MCF 10A (cell line): ENCODE measurements at regions of chr3 and their contacts with region 1.

Region 1: GRCh38 chr3:72818092-72818773 is 30.0 kb downstream of the SHQ1 start:
- DNase-seq: peak; percentile 37
- H3K4me3 Mint-ChIP-seq: no peak overlapping the region
- H3K27ac Mint-ChIP-seq: no peak overlapping the region
- H3K4me1 Mint-ChIP-seq: peaks cover 6% of the 10 kb centered on the region
- H3K27me3 Mint-ChIP-seq: no peaks in the 10 kb centered on the region
- CTCF ChIP-seq: peak; percentile 80

Region 2: DNA sequence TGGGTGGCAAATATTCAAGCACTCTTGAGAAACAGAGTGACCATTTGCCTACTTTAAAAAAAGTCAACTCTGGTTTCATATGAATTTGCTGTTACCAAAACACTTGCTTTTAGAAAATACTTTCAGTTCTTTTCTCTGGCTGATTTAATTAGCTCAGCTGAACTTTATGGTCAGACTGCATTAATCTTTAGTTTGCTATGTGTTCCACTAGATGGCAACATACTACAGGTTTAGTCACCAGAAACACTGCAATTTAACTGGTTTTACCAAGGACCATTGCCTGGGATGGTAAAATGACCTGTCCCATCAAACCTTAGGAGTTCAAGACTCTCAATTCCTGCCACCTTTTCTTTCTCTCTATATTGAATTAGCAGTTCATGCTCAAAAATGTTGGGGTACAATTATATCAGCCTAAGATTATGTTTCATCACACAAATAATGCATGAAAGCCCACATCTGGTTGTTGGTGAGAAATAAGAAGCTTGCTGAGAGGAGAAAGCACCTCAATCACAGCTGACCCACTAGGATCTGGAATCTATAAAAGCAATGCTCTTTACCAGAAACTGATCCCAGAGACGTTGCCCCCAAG is 1107.2 kb before region 1 on chr3:
- CTCF ChIA-PET with region 1: interaction called, 21 read pairs
- POLR2A ChIA-PET with region 1: interaction called, 3 read pairs
- intact Hi-C with region 1: loop called (anchors 2 kb)
- DNase-seq: peak; percentile 56
- H3K4me3 Mint-ChIP-seq: no peak overlapping the region
- H3K27ac Mint-ChIP-seq: no peak overlapping the region
- H3K4me1 Mint-ChIP-seq: no peaks in the 10 kb centered on the region
- H3K27me3 Mint-ChIP-seq: no peaks in the 10 kb centered on the region
- CTCF ChIP-seq: peak; percentile 48

Region 3: GRCh38 chr3:71926262-71926600 is 892.0 kb before region 1 on chr3:
- CTCF ChIA-PET with region 1: interaction called, 70 read pairs
- POLR2A ChIA-PET with region 1: interaction called, 4 read pairs
- intact Hi-C with region 1: no loop called
- DNase-seq: peak; percentile 68
- H3K4me3 Mint-ChIP-seq: no peak overlapping the region
- H3K27ac Mint-ChIP-seq: no peak overlapping the region
- H3K4me1 Mint-ChIP-seq: peaks cover 13% of the 10 kb centered on the region
- H3K27me3 Mint-ChIP-seq: peaks cover 10% of the 10 kb centered on the region
- CTCF ChIP-seq: peak; percentile 39

Region 4: GRCh38 chr3:71978150-71978721 is 840.0 kb before region 1 on chr3:
- CTCF ChIA-PET with region 1: interaction called, 7 read pairs
- POLR2A ChIA-PET with region 1: interaction called, 3 read pairs
- intact Hi-C with region 1: loop called (anchors 5 kb)
- DNase-seq: no peak
- H3K4me3 Mint-ChIP-seq: no peak overlapping the region
- H3K27ac Mint-ChIP-seq: no peak overlapping the region
- H3K4me1 Mint-ChIP-seq: peaks cover 20% of the 10 kb centered on the region
- H3K27me3 Mint-ChIP-seq: peaks cover 63% of the 10 kb centered on the region
- CTCF ChIP-seq: no peak

Region 5: DNA sequence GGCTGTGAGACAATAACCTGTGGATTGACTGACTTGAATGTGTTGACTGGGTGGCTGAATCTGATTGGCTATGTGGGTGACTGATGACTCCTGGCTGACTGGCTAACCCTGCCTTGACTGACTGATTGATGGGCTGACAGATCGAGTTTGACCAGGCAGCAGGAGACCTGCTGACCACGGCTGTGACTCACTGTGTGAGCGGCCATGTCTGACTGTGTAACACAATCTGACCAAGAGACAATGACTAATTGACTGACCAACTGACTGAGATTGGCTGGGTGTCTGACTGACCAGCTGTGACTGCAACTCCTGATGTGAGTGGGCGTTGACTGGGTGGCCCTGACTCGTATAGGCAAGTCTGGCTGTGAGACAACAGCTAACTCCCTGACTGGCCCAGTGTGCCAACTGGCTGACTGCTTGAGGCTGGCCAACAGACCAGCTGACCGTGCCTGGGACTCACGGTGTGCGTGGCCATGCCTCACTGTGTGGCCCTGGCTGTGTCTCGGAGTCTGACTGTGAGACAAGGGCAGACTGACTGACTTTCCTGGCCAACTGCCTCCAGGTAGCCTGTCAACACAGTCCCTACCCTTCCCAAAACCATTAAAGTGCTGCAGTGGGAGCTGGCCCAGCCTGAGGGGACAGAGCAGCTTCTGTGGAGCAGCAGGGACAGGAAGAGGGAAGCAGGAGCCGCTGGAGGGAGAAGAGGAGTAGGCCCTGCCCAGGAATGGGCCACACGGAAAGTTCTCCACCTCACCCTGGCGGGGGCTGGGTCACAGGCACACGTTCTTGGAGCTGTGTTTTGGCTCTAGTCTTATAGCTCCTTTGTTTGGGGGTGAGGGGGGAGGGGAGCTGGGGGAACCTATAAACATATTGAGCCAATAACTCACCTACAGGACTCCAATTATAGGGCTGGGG is 478.9 kb before region 1 on chr3:
- CTCF ChIA-PET with region 1: interaction called, 4 read pairs
- POLR2A ChIA-PET with region 1: no interaction called
- intact Hi-C with region 1: loop called (anchors 5 kb)
- DNase-seq: peak; percentile 93
- H3K4me3 Mint-ChIP-seq: no peak overlapping the region
- H3K27ac Mint-ChIP-seq: no peak overlapping the region
- H3K4me1 Mint-ChIP-seq: peaks cover 22% of the 10 kb centered on the region
- H3K27me3 Mint-ChIP-seq: no peaks in the 10 kb centered on the region
- CTCF ChIP-seq: no peak

Region 6: DNA sequence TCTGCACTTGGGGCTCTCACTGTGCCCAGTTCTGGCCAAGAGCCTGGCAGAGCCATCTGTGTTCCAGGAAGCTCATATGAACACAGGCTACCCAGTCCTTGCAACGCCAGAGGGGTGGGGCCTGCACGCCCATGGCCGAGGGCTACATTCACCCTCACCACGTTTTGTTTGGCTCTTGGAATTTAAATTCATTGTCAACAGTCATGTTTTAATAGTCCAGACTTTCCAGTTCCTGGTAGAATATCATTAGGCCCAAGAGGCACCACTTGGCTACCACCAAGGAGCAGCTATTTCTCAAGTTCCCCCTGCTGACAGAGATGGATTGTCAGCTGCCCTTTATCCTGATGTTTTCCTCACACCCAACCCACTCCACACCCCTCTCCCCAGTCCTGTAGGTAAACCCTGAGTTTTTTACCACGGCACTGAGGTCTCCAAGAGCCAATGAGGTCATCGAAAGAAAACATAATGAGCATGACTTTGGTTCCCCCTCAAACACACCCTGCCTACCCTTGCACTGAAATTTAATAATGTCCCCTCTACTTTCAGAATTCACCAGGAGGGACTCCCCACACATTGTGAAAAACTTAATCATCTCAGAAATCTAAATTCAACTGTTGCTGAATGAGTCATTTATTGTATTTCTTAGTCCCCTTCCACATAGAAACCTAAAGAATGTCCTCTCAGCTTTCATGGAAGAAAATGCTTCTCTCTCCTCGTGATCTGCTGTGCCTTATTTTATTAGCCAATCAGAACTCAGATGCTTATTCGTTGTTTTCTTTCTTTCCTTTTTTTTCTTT is 95.1 kb before region 1 on chr3:
- CTCF ChIA-PET with region 1: interaction called, 5 read pairs
- POLR2A ChIA-PET with region 1: no interaction called
- intact Hi-C with region 1: loop called (anchors 1 kb)
- DNase-seq: peak; percentile 85
- H3K4me3 Mint-ChIP-seq: peak overlapping the region; percentile 44
- H3K27ac Mint-ChIP-seq: peak overlapping the region; percentile 97
- H3K4me1 Mint-ChIP-seq: peaks cover 24% of the 10 kb centered on the region
- H3K27me3 Mint-ChIP-seq: no peaks in the 10 kb centered on the region
- CTCF ChIP-seq: no peak

Region 7: GRCh38 chr3:73602170-73602569 is 783.9 kb after region 1 on chr3:
- CTCF ChIA-PET with region 1: no interaction called
- POLR2A ChIA-PET with region 1: no interaction called
- intact Hi-C with region 1: no loop called
- DNase-seq: no peak
- H3K4me3 Mint-ChIP-seq: no peak overlapping the region
- H3K27ac Mint-ChIP-seq: no peak overlapping the region
- H3K4me1 Mint-ChIP-seq: no peaks in the 10 kb centered on the region
- H3K27me3 Mint-ChIP-seq: no peaks in the 10 kb centered on the region
- CTCF ChIP-seq: no peak